IMR-90 (cell line): ENCODE measurements at regions of chr1 and their contacts with region 1.

Region 1: GRCh38 chr1:115052454-115053083 is 22.9 kb downstream of the TSHB start:
- DNase-seq: peak; percentile 33
- ATAC-seq: peak; percentile 72
- H3K4me3 ChIP-seq: no peak overlapping the region
- H3K27ac ChIP-seq: no peak overlapping the region
- H3K4me1 ChIP-seq: peaks cover 4% of the 10 kb centered on the region; the same call in 1 of the 2 replicates
- H3K27me3 ChIP-seq: no peaks in the 10 kb centered on the region
- CTCF ChIP-seq: peak; percentile 60
- POLR2A ChIP-seq: no peak
- RAD21 ChIP-seq: peak; percentile 40

Region 2: GRCh38 chr1:114737314-114737849 is 315.2 kb before region 1 on chr1:
- CTCF ChIA-PET with region 1: no interaction called
- POLR2A ChIA-PET with region 1: no interaction called
- dilution Hi-C with region 1: no loop called
- in situ Hi-C with region 1: no loop called
- intact Hi-C with region 1: no loop called
- DNase-seq: no peak
- ATAC-seq: no peak
- H3K4me3 ChIP-seq: no peak overlapping the region
- H3K27ac ChIP-seq: no peak overlapping the region
- H3K4me1 ChIP-seq: no peaks in the 10 kb centered on the region
- H3K27me3 ChIP-seq: no peaks in the 10 kb centered on the region
- CTCF ChIP-seq: no peak
- POLR2A ChIP-seq: no peak
- RAD21 ChIP-seq: no peak

Region 3: GRCh38 chr1:114979278-114979891 is 73.2 kb before region 1 on chr1:
- CTCF ChIA-PET with region 1: interaction called, 5 read pairs
- POLR2A ChIA-PET with region 1: no interaction called
- dilution Hi-C with region 1: no loop called
- in situ Hi-C with region 1: no loop called
- intact Hi-C with region 1: loop called (anchors 1 kb)
- DNase-seq: peak; percentile 52
- ATAC-seq: peak; percentile 65; the same call in 1 of the 2 replicates
- H3K4me3 ChIP-seq: no peak overlapping the region
- H3K27ac ChIP-seq: no peak overlapping the region
- H3K4me1 ChIP-seq: no peaks in the 10 kb centered on the region
- H3K27me3 ChIP-seq: no peaks in the 10 kb centered on the region; the same call in 1 of the 2 replicates
- CTCF ChIP-seq: peak; percentile 73
- POLR2A ChIP-seq: no peak
- RAD21 ChIP-seq: peak; percentile 74

Region 4: DNA sequence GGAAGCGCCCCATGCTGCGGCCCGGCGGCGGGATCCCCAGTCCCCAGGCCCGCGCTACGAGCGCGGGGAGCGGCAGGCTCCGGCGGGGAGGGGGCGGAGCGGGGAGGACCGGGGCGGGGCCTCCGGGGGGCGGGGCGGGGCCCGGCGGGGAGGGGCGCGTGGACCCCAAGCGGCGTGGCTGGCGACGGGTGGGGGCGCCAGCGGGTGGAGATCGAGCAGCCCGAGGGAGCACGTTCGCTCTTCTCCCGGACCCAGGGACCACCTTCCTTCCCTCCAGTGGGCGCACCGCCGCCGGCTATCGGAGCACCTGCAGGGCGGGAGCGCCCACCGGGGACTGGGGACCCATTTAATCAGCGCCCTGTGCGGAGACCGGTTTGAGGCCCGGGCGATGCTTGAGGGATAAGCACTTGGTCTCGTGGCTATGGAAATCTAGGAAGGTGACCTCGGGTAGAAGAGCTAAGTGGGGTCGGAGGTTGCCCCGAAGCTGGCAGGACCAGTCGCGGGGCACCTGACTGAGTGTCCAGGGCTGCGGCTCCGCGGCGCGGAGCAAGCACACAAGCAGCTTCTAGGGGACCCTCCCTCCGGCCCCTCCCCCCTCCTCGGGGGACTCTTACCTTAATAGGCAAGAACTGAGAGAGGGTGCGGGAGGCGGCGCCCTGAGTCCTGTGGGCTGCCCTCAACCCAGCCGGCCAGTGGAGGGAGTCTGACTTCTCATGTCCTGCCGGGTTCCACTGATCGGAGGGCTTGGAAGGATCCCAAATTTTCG is 37.0 kb after region 1 on chr1 and contains the start of gene TSPAN2:
- CTCF ChIA-PET with region 1: no interaction called
- POLR2A ChIA-PET with region 1: no interaction called
- dilution Hi-C with region 1: no loop called
- in situ Hi-C with region 1: no loop called
- intact Hi-C with region 1: loop called (anchors 5 kb)
- DNase-seq: no peak
- ATAC-seq: peak; percentile 85
- H3K4me3 ChIP-seq: peak within 1 kb of the TSS; percentile 70
- H3K27ac ChIP-seq: peak within 1 kb of the TSS; percentile 67
- H3K4me1 ChIP-seq: peaks cover 2% of the 10 kb centered on the region
- H3K27me3 ChIP-seq: no peaks in the 10 kb centered on the region; the same call in none of the 2 replicates
- CTCF ChIP-seq: peak; percentile 35
- POLR2A ChIP-seq: no peak
- RAD21 ChIP-seq: no peak
- total RNA-seq, gene TSPAN2: 0.18 and 0.83 TPM in 2 replicates

Region 5: DNA sequence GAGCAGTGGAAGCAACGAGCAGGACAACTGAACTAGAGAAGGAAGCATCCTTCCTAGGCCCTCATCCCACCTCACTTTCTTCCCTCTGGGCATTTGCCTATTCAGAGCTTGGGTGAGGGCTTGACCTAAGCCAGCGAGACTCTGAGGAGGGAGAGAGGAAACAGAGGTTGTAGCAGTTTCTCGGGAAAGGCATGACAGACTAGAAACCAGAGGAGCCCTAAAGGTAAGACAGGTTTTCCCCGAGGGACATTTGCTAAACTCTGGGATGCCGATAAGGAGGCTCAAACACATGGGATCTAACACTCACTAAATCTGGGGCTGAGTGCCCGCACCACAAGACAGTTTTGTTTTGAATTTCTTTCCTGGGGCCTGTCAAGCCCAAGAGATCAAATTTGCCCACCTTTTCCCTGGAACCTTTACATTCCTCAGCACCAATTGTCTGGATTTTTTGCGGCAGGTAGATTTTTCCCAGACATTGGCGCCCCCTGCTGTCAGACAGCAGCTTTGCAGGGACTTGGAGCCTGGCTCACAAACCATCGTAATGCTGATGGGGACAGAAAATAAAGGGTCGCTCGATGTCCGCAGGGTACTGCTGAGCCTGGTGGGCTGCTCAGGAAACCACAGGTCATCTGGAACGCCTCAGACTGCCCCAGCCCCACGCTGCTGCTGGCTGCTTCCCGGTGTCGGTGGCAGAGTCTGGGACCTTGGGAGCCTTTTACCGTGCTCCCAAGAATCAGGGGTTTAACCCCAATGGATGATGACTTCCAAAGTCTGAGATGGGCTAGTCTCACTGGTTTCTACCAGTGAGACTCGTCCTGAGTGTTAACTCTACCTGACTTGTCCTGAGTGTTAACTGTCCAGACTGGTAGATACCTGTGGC is 60.2 kb after region 1 on chr1:
- CTCF ChIA-PET with region 1: no interaction called
- POLR2A ChIA-PET with region 1: no interaction called
- dilution Hi-C with region 1: no loop called
- in situ Hi-C with region 1: no loop called
- intact Hi-C with region 1: loop called (anchors 5 kb)
- DNase-seq: no peak
- ATAC-seq: peak; percentile 64
- H3K4me3 ChIP-seq: no peak overlapping the region
- H3K27ac ChIP-seq: no peak overlapping the region
- H3K4me1 ChIP-seq: peaks cover 8% of the 10 kb centered on the region
- H3K27me3 ChIP-seq: no peaks in the 10 kb centered on the region
- CTCF ChIP-seq: peak; percentile 87
- POLR2A ChIP-seq: no peak
- RAD21 ChIP-seq: peak; percentile 85

Region 6: DNA sequence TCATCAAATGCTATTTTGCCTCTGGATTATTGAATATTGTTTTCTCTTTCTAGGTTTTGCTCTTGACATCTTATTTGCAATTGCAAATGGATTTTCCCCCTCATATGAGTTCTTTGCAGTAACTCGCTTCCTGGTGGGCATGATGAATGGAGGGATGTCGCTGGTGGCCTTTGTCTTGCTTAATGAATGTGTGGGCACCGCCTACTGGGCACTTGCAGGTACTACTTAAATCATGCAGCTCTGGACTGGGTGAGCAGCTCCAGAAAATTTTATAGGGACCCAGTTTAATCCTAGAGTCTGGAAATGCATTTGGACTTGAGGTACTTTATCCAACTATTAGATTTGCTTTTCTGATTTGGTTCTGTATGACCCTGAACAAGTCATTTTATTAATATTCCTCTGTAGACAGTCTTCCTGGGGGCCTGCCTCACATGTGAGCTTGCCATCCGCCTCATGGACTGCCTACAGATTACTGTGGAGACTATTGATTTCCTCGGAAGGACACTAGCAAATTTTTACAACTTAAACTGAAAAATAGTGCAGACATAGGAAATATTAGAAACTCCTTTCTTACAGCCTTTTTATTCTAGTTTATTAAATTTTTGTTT is 968.2 kb after region 1 on chr1:
- CTCF ChIA-PET with region 1: no interaction called
- POLR2A ChIA-PET with region 1: no interaction called
- dilution Hi-C with region 1: no loop called
- in situ Hi-C with region 1: no loop called
- intact Hi-C with region 1: no loop called
- DNase-seq: peak; percentile 40
- ATAC-seq: peak; percentile 77; the same call in 1 of the 2 replicates
- H3K4me3 ChIP-seq: no peak overlapping the region
- H3K27ac ChIP-seq: no peak overlapping the region
- H3K4me1 ChIP-seq: no peaks in the 10 kb centered on the region
- H3K27me3 ChIP-seq: no peaks in the 10 kb centered on the region
- CTCF ChIP-seq: peak; percentile 38; the same call in 1 of the 2 replicates
- POLR2A ChIP-seq: no peak
- RAD21 ChIP-seq: peak; percentile 25; the same call in 1 of the 2 replicates

Region 7: GRCh38 chr1:116504308-116505156 is 1452.0 kb after region 1 on chr1:
- CTCF ChIA-PET with region 1: no interaction called
- POLR2A ChIA-PET with region 1: no interaction called
- dilution Hi-C with region 1: no loop called
- in situ Hi-C with region 1: no loop called
- intact Hi-C with region 1: loop called (anchors 5 kb)
- DNase-seq: peak; percentile 62
- ATAC-seq: peak; percentile 40
- H3K4me3 ChIP-seq: no peak overlapping the region
- H3K27ac ChIP-seq: no peak overlapping the region
- H3K4me1 ChIP-seq: peaks cover 6% of the 10 kb centered on the region
- H3K27me3 ChIP-seq: no peaks in the 10 kb centered on the region
- CTCF ChIP-seq: no peak
- POLR2A ChIP-seq: no peak
- RAD21 ChIP-seq: no peak